Dendritic cell treated with granulocyte-macrophage colony-stimulating factor and Interleukin-4, amounts not matched to agents 40 ng/mL and 50 ng/mL, for 4 days (primary cell): ENCODE measurements at regions of chr11 and their contacts with region 1.

Region 1: GRCh38 chr11:20459865-20460264 is 72.3 kb downstream of the PRMT3 start:
- H3K4me3 Mint-ChIP-seq: no peak overlapping the region
- H3K27ac Mint-ChIP-seq: no peak overlapping the region
- H3K4me1 Mint-ChIP-seq: peaks cover 6% of the 10 kb centered on the region
- H3K27me3 Mint-ChIP-seq: no peaks in the 10 kb centered on the region

Region 2: DNA sequence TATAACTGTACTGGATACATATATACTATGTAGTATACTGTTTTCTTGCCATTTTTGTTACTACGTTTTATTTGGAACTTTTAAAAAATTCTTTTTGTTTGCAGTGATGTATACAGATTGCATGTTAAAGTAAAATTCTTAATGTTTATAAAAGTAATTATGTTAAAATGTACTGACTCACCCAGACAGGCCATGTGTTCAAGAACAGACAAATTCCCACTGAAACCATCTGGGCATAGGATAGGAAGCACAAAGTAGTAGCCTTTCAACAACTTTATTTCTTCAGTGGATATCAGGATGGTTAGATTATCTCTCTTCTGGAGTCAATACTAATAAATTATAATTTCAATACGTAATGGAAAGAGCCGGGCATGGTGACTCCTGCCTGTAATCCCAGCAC is 52.5 kb before region 1 on chr11:
- intact Hi-C with region 1: loop called (anchors 10 kb)
- H3K4me3 Mint-ChIP-seq: no peak overlapping the region
- H3K27ac Mint-ChIP-seq: no peak overlapping the region
- H3K4me1 Mint-ChIP-seq: no peaks in the 10 kb centered on the region
- H3K27me3 Mint-ChIP-seq: no peaks in the 10 kb centered on the region